Activated CD8-positive, alpha-beta T cell treated with anti-CD3 and anti-CD28 coated beads for 36 hours (primary cell): ENCODE measurements at regions of chr1 and their contacts with region 1.

Region 1: GRCh38 chr1:63874278-63874880 is 100.6 kb downstream of the ROR1 start:
- DNase-seq: no peak
- ATAC-seq: no peak
- H3K4me3 Mint-ChIP-seq: no peak overlapping the region
- H3K27ac Mint-ChIP-seq: no peak overlapping the region
- H3K4me1 Mint-ChIP-seq: no peaks in the 10 kb centered on the region
- H3K27me3 Mint-ChIP-seq: no peaks in the 10 kb centered on the region
- CTCF ChIP-seq: no peak

Region 2: GRCh38 chr1:63821091-63822005 is 53.0 kb before region 1 on chr1:
- CTCF ChIA-PET with region 1: no interaction called
- POLR2A ChIA-PET with region 1: no interaction called
- intact Hi-C with region 1: loop called (anchors 2 kb)
- DNase-seq: no peak
- ATAC-seq: no peak
- H3K4me3 Mint-ChIP-seq: no peak overlapping the region
- H3K27ac Mint-ChIP-seq: no peak overlapping the region
- H3K4me1 Mint-ChIP-seq: no peaks in the 10 kb centered on the region
- H3K27me3 Mint-ChIP-seq: peaks cover 7% of the 10 kb centered on the region
- CTCF ChIP-seq: no peak